ENCODE measurements at regions of chr19 and their contacts with region 1.

Region 1: GRCh38 chr19:39104186-39104596 is 20.0 kb downstream of the ACP7 start:
- DNase-seq: peak in 2 of 10 donors; percentile 42 to 81

Region 2: DNA sequence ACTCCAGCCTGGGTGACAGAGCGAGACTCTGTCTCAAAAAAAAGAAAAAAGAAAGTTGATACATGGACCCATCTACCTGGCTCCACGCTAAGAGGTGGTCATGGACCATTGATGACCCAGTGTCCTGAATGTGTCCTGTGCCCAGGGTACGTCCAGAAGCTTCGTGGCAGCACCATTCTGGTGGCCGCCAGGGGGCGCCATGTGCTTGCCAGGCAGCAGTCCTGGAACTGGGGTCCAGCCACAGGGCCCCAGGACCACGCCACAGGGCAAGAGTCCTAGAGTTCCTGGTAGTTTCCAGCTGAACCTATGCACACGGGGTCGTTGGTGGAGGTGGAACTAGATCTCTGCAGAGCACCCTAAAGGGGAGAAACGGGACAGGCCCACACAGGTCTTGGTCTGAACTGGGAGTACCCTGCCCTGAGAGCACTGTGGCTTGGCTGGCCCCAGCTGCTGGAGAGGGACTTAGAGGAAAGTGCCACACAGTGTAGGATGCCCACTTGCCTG is 51.9 kb before region 1 on chr19:
- intact Hi-C with region 1: loop called (anchors 10 kb)
- DNase-seq: peak; percentile 56 to 98 (median 80)

Measured in posterior cingulate gyrus (tissue), 11 donors.